IMR-90 (cell line): ENCODE measurements at regions of chr5 and their contacts with region 1.

Region 1: GRCh38 chr5:27020973-27021372 is 17.4 kb downstream of the CDH9 start:
- DNase-seq: peak; percentile 0
- ATAC-seq: no peak
- H3K4me3 ChIP-seq: no peak overlapping the region
- H3K27ac ChIP-seq: no peak overlapping the region
- H3K4me1 ChIP-seq: no peaks in the 10 kb centered on the region
- H3K27me3 ChIP-seq: no peaks in the 10 kb centered on the region
- CTCF ChIP-seq: peak; percentile 42
- POLR2A ChIP-seq: no peak
- RAD21 ChIP-seq: peak; percentile 62

Region 2: GRCh38 chr5:27038476-27038875 is 17.5 kb after region 1 on chr5 and contains the start of gene CDH9:
- CTCF ChIA-PET with region 1: no interaction called
- POLR2A ChIA-PET with region 1: no interaction called
- dilution Hi-C with region 1: no loop called
- in situ Hi-C with region 1: no loop called
- intact Hi-C with region 1: no loop called
- DNase-seq: no peak
- ATAC-seq: no peak
- H3K4me3 ChIP-seq: no peak within 1 kb of the TSS
- H3K27ac ChIP-seq: no peak within 1 kb of the TSS
- H3K4me1 ChIP-seq: no peaks in the 10 kb centered on the region
- H3K27me3 ChIP-seq: no peaks in the 10 kb centered on the region
- CTCF ChIP-seq: no peak
- POLR2A ChIP-seq: no peak
- RAD21 ChIP-seq: no peak
- total RNA-seq, gene CDH9: not detected in 2 replicates

Region 3: GRCh38 chr5:27217160-27217956 is 196.4 kb after region 1 on chr5:
- CTCF ChIA-PET with region 1: no interaction called
- POLR2A ChIA-PET with region 1: no interaction called
- dilution Hi-C with region 1: no loop called
- in situ Hi-C with region 1: no loop called
- intact Hi-C with region 1: no loop called
- DNase-seq: no peak
- ATAC-seq: no peak
- H3K4me3 ChIP-seq: no peak overlapping the region
- H3K27ac ChIP-seq: no peak overlapping the region
- H3K4me1 ChIP-seq: no peaks in the 10 kb centered on the region
- H3K27me3 ChIP-seq: no peaks in the 10 kb centered on the region
- CTCF ChIP-seq: no peak
- POLR2A ChIP-seq: no peak
- RAD21 ChIP-seq: no peak

Region 4: GRCh38 chr5:28014779-28015178 is 993.8 kb after region 1 on chr5:
- CTCF ChIA-PET with region 1: no interaction called
- POLR2A ChIA-PET with region 1: no interaction called
- dilution Hi-C with region 1: no loop called
- in situ Hi-C with region 1: no loop called
- intact Hi-C with region 1: loop called (anchors 10 kb)
- DNase-seq: no peak
- ATAC-seq: no peak
- H3K4me3 ChIP-seq: no peak overlapping the region
- H3K27ac ChIP-seq: no peak overlapping the region
- H3K4me1 ChIP-seq: no peaks in the 10 kb centered on the region
- H3K27me3 ChIP-seq: no peaks in the 10 kb centered on the region
- CTCF ChIP-seq: 0 out of 2 replicates have a peak, but pooled peaks have one; percentile 15
- POLR2A ChIP-seq: no peak
- RAD21 ChIP-seq: no peak

Region 5: GRCh38 chr5:28766565-28767158 is 1745.7 kb after region 1 on chr5:
- CTCF ChIA-PET with region 1: no interaction called
- POLR2A ChIA-PET with region 1: no interaction called
- dilution Hi-C with region 1: no loop called
- in situ Hi-C with region 1: no loop called
- intact Hi-C with region 1: loop called (anchors 2 kb)
- DNase-seq: peak; percentile 21
- ATAC-seq: no peak
- H3K4me3 ChIP-seq: no peak overlapping the region
- H3K27ac ChIP-seq: no peak overlapping the region
- H3K4me1 ChIP-seq: no peaks in the 10 kb centered on the region
- H3K27me3 ChIP-seq: no peaks in the 10 kb centered on the region
- CTCF ChIP-seq: peak; percentile 38
- POLR2A ChIP-seq: no peak
- RAD21 ChIP-seq: peak; percentile 50